A549 (cell line): ENCODE measurements at regions of chr11 and their contacts with region 1.

Region 1: DNA sequence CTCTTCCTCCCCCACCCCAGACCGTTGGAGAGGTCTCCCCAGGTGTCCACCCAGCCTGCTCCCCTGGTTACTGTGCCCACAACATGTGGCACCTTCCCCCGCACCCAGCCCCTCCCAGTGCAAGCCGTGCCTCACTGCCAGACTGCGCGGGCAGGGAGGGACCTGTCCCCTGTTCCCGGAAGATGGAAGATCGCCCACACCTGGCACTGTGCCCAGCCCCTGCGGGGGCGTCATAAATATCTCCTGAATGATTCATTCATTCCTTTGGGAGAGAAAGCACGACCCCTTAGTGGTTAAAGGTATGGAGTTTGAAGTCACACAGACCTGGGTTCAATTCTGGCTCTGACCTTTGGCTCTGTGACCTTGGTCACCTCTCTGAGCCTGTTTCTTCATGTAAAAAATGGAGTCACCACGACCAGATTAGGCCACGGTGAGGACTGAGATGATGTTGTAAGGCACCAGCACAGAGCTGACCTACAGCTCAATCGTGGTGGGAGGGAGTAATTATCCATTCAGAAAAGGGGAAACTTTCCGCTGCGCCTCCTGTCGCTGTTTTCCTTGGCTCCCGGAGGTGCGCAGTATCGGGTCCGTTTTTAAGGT is 506 bp upstream of the SYT12 start:
- DNase-seq: peak in 1 of 2 experiments; percentile 45
- ATAC-seq: peak in 1 of 2 experiments; percentile 15; a peak in 3 of 6 replicates
- H3K4me3 ChIP-seq: peak overlapping the region; percentile 66; the same call in 2 of the 3 replicates
- H3K27ac ChIP-seq: peak overlapping the region; percentile 72 to 87; a peak in 5 of 6 replicates
- H3K4me1 ChIP-seq: peaks cover 24% of the 10 kb centered on the region
- CTCF ChIP-seq: no peak
- EP300 ChIP-seq: no peak
- POLR2A ChIP-seq: no peak
- RAD21 ChIP-seq: no peak

Region 2: GRCh38 chr11:66970808-66971442 is 51.5 kb before region 1 on chr11:
- CTCF ChIA-PET with region 1: interaction called, 12 read pairs
- POLR2A ChIA-PET with region 1: interaction called, 3 read pairs
- DNase-seq: peak; percentile 90 to 99
- ATAC-seq: peak; percentile 87 to 91
- H3K4me3 ChIP-seq: no peak overlapping the region
- H3K27ac ChIP-seq: peak overlapping the region; percentile 95 to 99
- H3K4me1 ChIP-seq: peaks cover 93% of the 10 kb centered on the region
- CTCF ChIP-seq: no peak
- EP300 ChIP-seq: peak; percentile 92 to 95
- POLR2A ChIP-seq: no peak
- RAD21 ChIP-seq: peak; percentile 49 to 68

Region 3: GRCh38 chr11:67010323-67010905 is 12.0 kb before region 1 on chr11:
- CTCF ChIA-PET with region 1: interaction called, 24 read pairs
- POLR2A ChIA-PET with region 1: no interaction called
- DNase-seq: no peak
- ATAC-seq: peak in 1 of 2 experiments; percentile 26; a peak in 1 of 6 replicates
- H3K4me3 ChIP-seq: no peak overlapping the region
- H3K27ac ChIP-seq: 0 out of 6 replicates have a peak overlapping the region, but pooled peaks of 1 of the 2 experiments have one; percentile 2
- H3K4me1 ChIP-seq: no peaks in the 10 kb centered on the region
- CTCF ChIP-seq: no peak
- EP300 ChIP-seq: no peak
- POLR2A ChIP-seq: no peak
- RAD21 ChIP-seq: no peak

Region 4: GRCh38 chr11:67053896-67054842 is 31.7 kb after region 1 on chr11:
- CTCF ChIA-PET with region 1: interaction called, 67 read pairs
- POLR2A ChIA-PET with region 1: interaction called, 3 read pairs
- DNase-seq: peak; percentile 80 to 98
- ATAC-seq: peak; percentile 64 to 82
- H3K4me3 ChIP-seq: no peak overlapping the region
- H3K27ac ChIP-seq: peak overlapping the region; percentile 75 to 91
- H3K4me1 ChIP-seq: peaks cover 44% of the 10 kb centered on the region
- CTCF ChIP-seq: peak; percentile 81
- EP300 ChIP-seq: no peak
- POLR2A ChIP-seq: no peak
- RAD21 ChIP-seq: peak; percentile 84 to 85

Region 5: GRCh38 chr11:67136156-67136555 is 113.7 kb after region 1 on chr11:
- CTCF ChIA-PET with region 1: no interaction called
- POLR2A ChIA-PET with region 1: no interaction called
- DNase-seq: no peak
- ATAC-seq: no peak
- H3K4me3 ChIP-seq: no peak overlapping the region
- H3K27ac ChIP-seq: no peak overlapping the region
- H3K4me1 ChIP-seq: no peaks in the 10 kb centered on the region
- CTCF ChIP-seq: no peak
- EP300 ChIP-seq: no peak
- POLR2A ChIP-seq: no peak
- RAD21 ChIP-seq: no peak

Region 6: GRCh38 chr11:67522844-67523555 is 500.6 kb after region 1 on chr11 and contains the start of gene CABP2:
- CTCF ChIA-PET with region 1: no interaction called
- POLR2A ChIA-PET with region 1: no interaction called
- DNase-seq: no peak
- ATAC-seq: peak in 1 of 2 experiments; percentile 32; a peak in 3 of 6 replicates
- H3K4me3 ChIP-seq: no peak within 1 kb of the TSS
- H3K27ac ChIP-seq: no peak within 1 kb of the TSS
- H3K4me1 ChIP-seq: no peaks in the 10 kb centered on the region
- CTCF ChIP-seq: no peak
- EP300 ChIP-seq: no peak
- POLR2A ChIP-seq: no peak
- RAD21 ChIP-seq: no peak
- polyA plus RNA-seq, gene CABP2: not detected in 2 replicates